Dendritic cell treated with granulocyte-macrophage colony-stimulating factor and Interleukin-4, amounts not matched to agents 40 ng/mL and 50 ng/mL, for 4 days (primary cell): ENCODE measurements at regions of chr22 and their contacts with region 1.

Region 1: DNA sequence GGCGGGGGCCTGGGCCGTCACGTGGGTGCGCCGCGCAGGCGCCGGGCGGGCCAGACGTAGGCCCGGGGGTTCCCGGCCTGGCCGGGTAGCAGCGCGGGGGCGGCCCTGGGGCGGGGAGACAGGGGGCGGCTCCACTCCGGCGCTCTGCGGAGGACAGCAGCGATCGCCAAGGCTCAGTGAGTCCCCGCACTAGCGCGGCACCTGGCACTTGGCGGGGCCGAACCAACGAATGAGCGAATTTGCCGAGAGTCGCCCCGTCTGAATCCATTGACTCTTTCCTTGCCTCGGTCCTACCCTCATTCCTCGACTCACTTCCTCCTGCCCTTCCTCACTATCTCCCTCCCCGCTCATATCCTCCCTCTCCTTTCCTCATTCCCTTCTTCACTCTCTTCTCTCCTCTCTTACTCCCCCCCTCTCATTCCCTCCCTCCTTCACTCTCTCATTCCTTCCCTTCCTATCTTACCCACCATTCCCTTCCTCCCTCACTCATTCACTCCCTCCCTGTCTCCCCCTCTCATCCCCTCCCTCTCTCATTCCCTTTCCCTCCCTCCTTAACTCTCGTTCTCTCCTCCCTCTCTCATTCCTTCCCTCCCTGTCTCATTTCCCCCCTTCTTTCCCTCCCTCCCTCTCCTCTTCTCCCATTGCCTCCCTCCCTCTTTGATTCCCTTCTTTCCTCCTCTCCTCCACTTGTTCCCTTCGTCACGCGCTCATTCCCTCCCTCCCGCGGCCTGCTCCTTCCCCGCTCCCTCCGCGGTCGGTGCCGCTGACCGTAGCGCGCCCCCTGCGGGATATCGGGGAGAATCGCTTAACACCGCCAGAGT is 476 bp upstream of the KLHL22 start:
- H3K4me3 Mint-ChIP-seq: peak overlapping the region; percentile 88
- H3K27ac Mint-ChIP-seq: peak overlapping the region; percentile 94
- H3K4me1 Mint-ChIP-seq: peaks cover 40% of the 10 kb centered on the region
- H3K27me3 Mint-ChIP-seq: no peaks in the 10 kb centered on the region

Region 2: DNA sequence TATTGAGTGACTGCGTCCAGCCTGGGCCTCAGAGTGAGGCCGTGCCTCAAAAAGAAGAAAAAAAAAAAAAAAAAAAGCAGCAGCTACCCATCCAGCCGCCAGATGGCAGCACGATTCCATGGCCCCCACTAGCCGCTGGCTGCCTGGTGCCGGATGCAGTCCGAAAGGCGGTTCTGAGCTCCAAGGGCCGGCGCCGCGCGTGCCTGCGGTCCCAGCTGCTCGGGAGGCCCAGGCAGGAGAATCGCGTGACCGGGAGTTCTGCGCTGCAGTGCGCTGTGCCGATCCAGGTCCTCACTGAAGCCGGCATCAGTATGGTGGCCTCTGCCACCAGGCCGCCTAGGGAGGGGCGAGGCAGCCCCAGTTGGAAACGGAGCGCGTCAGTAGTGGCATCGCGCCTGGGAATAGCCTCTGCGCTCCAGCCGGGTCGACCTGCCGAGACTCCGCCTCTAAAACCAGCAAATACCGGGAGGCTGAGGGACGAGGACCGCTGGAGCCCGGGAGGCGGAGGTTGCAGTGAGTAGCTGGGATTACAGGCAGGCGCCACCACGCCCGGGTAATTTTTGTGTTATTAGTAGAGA is 77.8 kb before region 1 on chr22:
- intact Hi-C with region 1: loop called (anchors 1 kb)
- H3K4me3 Mint-ChIP-seq: peak overlapping the region; percentile 57
- H3K27ac Mint-ChIP-seq: no peak overlapping the region
- H3K4me1 Mint-ChIP-seq: no peaks in the 10 kb centered on the region
- H3K27me3 Mint-ChIP-seq: peaks cover 18% of the 10 kb centered on the region

Region 3: DNA sequence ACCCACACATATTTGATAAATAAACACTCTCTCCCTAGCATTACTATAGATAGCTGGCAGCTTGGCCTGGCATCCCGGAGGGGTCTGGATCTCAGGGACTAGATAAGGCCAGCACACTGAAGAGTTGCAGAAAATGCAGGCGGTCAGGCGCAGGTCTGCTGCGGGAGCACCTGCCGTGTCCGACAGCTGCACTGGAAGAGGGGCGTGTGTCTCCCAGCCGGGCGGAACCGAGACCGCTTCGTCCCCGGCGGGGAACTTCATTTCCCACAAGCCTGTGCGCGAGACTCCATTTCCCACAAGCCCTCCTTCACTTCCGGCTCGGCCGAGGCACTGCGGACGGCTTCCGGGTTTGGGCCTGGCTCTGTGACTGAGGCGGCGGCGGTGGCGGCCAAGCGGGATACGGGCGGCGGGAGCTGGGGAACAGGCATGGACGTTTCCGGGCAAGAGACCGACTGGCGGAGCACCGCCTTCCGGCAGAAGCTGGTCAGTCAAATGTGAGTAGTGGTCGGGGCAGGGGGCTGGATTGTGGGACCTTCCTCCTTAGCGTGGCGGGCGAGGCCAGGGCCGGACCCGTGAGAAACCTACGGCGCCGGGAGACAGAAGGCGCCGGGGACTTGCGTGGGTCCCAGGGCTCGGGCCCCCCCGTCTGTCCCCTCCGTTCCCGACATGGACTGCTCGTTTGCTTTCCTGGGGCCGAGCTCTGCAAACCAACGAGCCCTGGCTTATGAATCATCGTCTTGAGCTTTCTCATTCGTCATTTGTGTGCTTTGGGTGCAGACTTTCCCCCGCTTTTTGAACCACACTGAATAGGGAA is 11.4 kb after region 1 on chr22 and contains the start of gene MED15:
- intact Hi-C with region 1: loop called (anchors 1 kb)
- H3K4me3 Mint-ChIP-seq: peak within 1 kb of the TSS; percentile 93
- H3K27ac Mint-ChIP-seq: peak within 1 kb of the TSS; percentile 95
- H3K4me1 Mint-ChIP-seq: peaks cover 53% of the 10 kb centered on the region
- H3K27me3 Mint-ChIP-seq: no peaks in the 10 kb centered on the region